ENCODE measurements at regions of chr1 and their contacts with region 1.

Region 1: DNA sequence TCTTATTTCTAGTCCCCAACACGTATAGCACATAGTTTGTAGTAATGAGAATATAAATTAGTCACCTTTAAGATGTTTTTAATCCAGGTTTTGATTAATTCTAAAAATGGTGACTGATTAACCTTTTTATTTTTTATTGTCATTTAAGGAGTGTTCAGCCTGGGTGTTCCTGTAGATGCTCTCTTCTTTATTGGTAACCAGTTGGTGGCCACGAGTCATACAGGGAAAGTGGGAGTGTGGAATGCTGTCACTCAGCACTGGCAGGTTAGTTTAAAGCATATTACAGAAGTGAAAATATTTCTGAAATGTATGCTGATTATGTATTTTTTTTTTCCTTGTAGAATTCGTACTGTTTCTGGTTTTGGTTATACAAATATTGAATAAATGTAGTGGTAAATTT is 28.1 kb downstream of the KCTD3 start:
- DNase-seq: no peak
- H3K4me3 ChIP-seq: no peak overlapping the region
- H3K27me3 ChIP-seq: no peaks in the 10 kb centered on the region
- CTCF ChIP-seq: no peak

Region 2: DNA sequence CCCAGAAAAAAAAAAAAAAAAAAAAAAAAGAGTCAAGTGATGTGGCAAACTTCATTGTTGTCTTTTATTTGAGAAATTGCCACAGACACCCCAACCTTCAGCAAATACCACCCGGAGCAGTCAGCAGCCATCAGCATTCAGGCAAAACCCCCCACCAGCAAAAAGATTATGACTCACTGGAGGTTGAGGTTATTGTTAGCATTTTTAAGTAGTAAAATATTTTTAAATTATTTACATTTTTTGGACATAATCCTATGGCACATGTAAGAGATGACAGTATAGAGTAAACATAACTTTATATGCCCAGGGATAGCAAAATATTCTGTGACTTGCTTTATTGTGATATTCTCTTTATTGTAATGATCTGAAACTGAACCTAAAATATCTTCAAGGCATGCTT is 896.6 kb before region 1 on chr1:
- CTCF ChIA-PET with region 1: no interaction called
- POLR2A ChIA-PET with region 1: interaction called, 13 read pairs
- DNase-seq: no peak
- H3K4me3 ChIP-seq: no peak overlapping the region
- H3K27me3 ChIP-seq: no peaks in the 10 kb centered on the region
- CTCF ChIP-seq: no peak

Region 3: GRCh38 chr1:215360758-215361157 is 234.4 kb before region 1 on chr1:
- CTCF ChIA-PET with region 1: no interaction called
- POLR2A ChIA-PET with region 1: no interaction called
- DNase-seq: no peak
- H3K4me3 ChIP-seq: no peak overlapping the region
- H3K27me3 ChIP-seq: no peaks in the 10 kb centered on the region
- CTCF ChIP-seq: no peak

Region 4: DNA sequence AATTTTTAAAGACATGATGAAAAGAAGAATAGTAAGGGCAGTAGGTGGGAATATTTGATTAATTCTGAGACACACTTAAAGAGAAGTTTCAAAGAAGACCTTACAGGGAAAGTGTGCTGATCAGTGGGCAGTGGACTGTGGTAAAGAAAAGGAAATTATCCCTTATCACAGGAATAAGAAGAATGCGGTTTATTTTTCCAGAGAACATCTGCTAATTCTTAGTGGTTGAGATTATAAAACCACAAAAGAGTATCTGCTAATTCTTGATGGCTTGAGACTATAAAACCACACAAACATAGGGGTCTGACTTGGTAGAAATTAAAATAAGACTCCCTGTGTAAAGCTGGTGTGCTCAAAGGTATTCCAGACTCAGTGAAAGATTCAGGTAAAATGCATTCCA is 88.1 kb before region 1 on chr1:
- CTCF ChIA-PET with region 1: no interaction called
- POLR2A ChIA-PET with region 1: no interaction called
- DNase-seq: no peak
- H3K4me3 ChIP-seq: no peak overlapping the region
- H3K27me3 ChIP-seq: no peaks in the 10 kb centered on the region
- CTCF ChIP-seq: no peak

Measured in BJ (cell line).